ENCODE measurements at regions of chr13 and their contacts with region 1.

Region 1: DNA sequence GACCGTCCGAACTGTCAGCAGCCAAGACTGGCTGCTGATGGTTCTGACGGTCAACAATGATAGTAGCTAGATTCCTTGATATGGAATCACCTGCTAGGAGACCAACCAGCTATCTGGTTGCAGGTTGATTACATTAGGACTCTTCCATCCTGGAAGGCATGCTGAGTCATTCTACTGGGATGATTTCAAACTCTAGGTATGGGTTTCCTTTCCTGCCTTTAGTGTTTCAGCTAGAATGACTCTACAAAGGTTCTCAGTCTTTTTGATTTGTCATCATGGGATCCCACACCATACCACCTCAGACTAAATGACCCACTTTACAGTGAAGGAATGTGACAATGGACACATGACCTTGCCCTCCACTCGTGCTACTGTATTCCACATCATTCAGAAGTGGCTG is 138.1 kb upstream of the KL start:
- DNase-seq: no peak
- ATAC-seq: no peak
- H3K4me3 ChIP-seq: no peak overlapping the region
- H3K27ac ChIP-seq: no peak overlapping the region
- H3K4me1 ChIP-seq: peaks cover 0 to 9% (median 0%) of the 10 kb centered on the region in 9 donors
- H3K27me3 ChIP-seq: no peaks in the 10 kb centered on the region
- CTCF ChIP-seq: no peak

Region 2: DNA sequence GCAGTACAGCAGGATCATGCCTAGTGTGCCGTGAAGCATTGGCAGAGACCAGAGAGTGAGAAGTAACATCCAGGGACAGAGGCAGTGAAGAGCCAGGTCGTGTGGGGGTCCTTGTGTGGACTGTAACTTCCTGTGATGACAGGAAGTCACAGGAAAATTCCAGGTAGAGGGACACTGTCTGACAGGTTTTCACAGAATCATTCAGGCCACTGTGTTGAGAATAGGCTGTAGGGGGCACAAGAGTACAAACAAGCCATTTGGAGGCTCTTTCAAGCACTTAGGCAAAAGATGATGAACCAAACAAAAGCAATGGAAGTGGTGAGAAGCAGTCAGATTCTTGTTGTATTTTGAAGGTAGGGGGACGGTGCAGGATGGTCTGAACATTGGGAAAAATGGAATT is 496.6 kb before region 1 on chr13:
- intact Hi-C with region 1: no loop called
- DNase-seq: peak in 1 of 2 donors; percentile 30
- ATAC-seq: peak in 6 of 8 donors; percentile 29 to 76 (median 58)
- H3K4me3 ChIP-seq: no peak overlapping the region
- H3K27ac ChIP-seq: no peak overlapping the region
- H3K4me1 ChIP-seq: no peaks in the 10 kb centered on the region
- H3K27me3 ChIP-seq: no peaks in the 10 kb centered on the region
- CTCF ChIP-seq: peak; percentile 34 to 73 (median 60)

Region 3: GRCh38 chr13:32804673-32805230 is 73.4 kb before region 1 on chr13:
- intact Hi-C with region 1: loop called in 1 of 10 experiments (anchors 10 kb)
- DNase-seq: no peak
- ATAC-seq: no peak
- H3K4me3 ChIP-seq: no peak overlapping the region
- H3K27ac ChIP-seq: no peak overlapping the region
- H3K4me1 ChIP-seq: no peaks in the 10 kb centered on the region
- H3K27me3 ChIP-seq: no peaks in the 10 kb centered on the region
- CTCF ChIP-seq: no peak

Region 4: GRCh38 chr13:33182729-33183128 is 304.6 kb after region 1 on chr13:
- intact Hi-C with region 1: no loop called
- DNase-seq: no peak
- ATAC-seq: no peak
- H3K4me3 ChIP-seq: no peak overlapping the region
- H3K27ac ChIP-seq: peak overlapping the region in 2 of 10 donors; percentile 11 to 17
- H3K4me1 ChIP-seq: peaks cover 13 to 98% (median 80%) of the 10 kb centered on the region in 9 donors
- H3K27me3 ChIP-seq: no peaks in the 10 kb centered on the region
- CTCF ChIP-seq: no peak